MCF 10A (cell line): ENCODE measurements at regions of chr7 and their contacts with region 1.

Region 1: GRCh38 chr7:141533149-141533949 is 17.9 kb upstream of the AGK start:
- DNase-seq: peak; percentile 78
- H3K4me3 Mint-ChIP-seq: no peak overlapping the region
- H3K27ac Mint-ChIP-seq: no peak overlapping the region
- H3K4me1 Mint-ChIP-seq: no peaks in the 10 kb centered on the region
- H3K27me3 Mint-ChIP-seq: peaks cover 23% of the 10 kb centered on the region
- CTCF ChIP-seq: peak; percentile 89

Region 2: DNA sequence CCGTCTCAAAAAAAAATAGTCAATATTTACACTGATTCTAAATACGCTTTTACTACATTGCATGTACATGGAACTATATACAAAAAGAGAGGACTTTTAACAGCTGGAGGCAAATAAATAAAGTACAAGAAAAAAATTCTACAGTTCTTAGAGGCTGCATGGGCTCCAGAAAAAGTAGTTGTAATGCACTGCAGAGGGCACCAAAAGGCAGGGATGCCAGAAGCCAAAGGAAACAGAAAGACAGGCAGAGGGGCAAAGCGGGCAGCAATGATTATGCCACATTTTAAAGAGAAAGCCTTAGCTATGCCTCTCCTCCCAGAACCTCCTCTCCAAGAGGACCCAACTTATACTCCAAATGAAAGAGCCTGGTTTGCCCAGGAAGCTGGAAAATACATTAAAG is 872.2 kb before region 1 on chr7:
- CTCF ChIA-PET with region 1: no interaction called
- POLR2A ChIA-PET with region 1: no interaction called
- intact Hi-C with region 1: loop called (anchors 1 kb)
- DNase-seq: no peak
- H3K4me3 Mint-ChIP-seq: no peak overlapping the region
- H3K27ac Mint-ChIP-seq: no peak overlapping the region
- H3K4me1 Mint-ChIP-seq: peaks cover 12% of the 10 kb centered on the region
- H3K27me3 Mint-ChIP-seq: no peaks in the 10 kb centered on the region
- CTCF ChIP-seq: no peak

Region 3: DNA sequence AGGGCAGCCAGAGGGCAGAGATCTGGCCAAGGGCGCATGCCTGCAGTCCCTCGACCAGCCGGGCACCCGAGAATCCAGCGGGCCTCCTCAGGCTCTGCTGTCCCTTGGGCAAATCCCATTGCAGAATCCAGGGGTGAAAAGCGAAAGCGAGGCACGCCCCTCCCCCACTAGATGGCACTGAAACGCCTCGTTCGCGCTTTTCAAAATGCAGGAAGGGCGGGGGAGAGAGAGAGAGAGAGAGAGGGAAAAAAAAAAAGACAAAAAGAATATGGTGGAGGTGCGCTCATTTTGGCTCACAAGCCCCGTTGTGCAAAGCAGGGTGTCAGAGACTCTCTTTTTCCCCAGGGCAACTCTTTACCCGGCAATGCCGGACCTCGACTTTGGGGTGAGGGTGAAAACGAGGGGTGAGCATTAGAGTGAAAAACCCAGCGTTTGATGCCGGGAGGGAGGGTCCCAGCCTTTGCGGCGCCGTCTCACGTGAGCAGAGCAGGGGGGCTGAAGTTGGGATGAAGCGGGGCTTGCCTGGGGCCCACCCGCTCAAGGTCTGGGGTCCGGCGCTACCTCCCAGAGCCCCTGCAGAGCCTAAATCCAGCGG is 462.0 kb before region 1 on chr7:
- CTCF ChIA-PET with region 1: interaction called, 6 read pairs
- POLR2A ChIA-PET with region 1: no interaction called
- intact Hi-C with region 1: loop called (anchors 1 kb)
- DNase-seq: peak; percentile 31
- H3K4me3 Mint-ChIP-seq: peak overlapping the region; percentile 73
- H3K27ac Mint-ChIP-seq: no peak overlapping the region
- H3K4me1 Mint-ChIP-seq: no peaks in the 10 kb centered on the region
- H3K27me3 Mint-ChIP-seq: peaks cover 45% of the 10 kb centered on the region
- CTCF ChIP-seq: peak; percentile 22

Region 4: DNA sequence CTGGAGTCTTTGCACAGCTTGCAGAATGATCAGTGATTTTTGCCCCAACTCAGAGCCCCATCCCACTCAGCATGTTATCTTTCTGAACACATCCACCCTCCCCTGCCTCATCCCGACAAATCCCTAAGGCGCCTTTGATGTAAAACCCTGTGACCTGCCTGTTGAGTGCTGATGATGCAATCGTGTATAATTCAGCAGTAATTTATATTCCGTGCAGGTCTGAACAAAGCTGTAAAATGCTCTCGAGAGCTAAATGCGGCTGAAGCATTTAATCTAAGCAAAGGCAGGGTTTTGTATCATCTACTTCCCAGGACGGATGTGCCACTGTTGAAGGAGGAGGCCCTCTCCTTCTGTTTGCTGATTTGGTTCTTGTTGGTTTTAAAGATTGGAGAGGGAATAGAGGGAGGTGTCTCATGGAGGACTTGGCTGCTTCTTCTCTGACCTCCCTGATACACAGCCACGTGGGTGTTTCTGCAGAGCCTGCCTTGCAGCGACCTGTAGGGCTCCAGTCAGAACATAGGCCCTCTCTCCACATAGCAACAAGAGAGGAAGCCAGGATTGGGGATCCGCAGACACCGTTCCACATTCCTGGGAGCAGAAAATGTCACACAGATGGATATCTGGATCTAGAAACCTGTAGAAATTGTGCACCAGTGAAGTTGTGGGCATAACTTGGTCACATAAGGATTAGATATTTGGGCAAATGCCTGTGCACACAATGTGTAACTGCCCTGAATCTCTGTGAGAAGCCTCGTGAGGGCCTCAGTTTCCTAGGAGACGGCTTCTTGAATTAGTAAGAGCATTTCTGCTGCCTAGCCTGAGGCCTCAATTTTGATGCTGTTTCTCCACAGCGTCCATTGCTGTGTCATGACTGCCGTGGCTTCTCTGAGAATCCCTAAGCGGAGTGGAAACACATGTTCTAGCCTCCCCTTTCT is 72.3 kb before region 1 on chr7:
- CTCF ChIA-PET with region 1: no interaction called
- POLR2A ChIA-PET with region 1: no interaction called
- intact Hi-C with region 1: no loop called
- DNase-seq: peak; percentile 41
- H3K4me3 Mint-ChIP-seq: no peak overlapping the region
- H3K27ac Mint-ChIP-seq: no peak overlapping the region
- H3K4me1 Mint-ChIP-seq: no peaks in the 10 kb centered on the region
- H3K27me3 Mint-ChIP-seq: no peaks in the 10 kb centered on the region
- CTCF ChIP-seq: no peak

Region 5: DNA sequence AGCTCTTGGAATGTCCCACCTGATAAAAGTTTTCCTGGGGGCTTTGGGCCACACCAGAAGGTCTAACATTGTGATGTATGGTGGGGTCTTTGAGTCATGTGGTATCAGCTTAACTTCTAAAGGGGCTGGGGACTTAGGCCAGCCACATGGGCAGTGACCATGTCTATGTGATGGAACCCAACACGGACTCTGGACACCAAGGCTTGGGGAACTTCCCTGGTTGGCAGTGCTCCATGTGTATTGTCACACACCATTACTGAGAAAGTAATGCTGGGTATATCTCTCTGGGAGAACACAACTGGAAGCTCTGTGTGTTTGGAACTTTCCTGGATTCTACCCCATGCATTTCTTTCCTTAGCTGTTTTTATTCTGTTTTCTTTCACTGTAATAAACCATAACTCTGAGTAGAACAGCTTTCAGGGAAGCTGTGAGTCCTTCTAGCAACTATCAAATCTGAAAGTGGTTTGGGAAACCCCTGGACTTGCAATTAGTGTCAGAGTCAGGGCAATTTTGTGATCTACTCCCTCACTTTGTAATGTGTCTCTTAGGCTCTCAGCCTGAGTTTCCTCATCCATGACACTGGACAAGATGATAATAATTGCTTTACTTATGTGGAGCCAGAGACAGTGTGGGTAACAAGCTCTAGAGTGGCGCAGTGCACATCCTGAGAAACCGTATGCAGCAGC is 10.5 kb before region 1 on chr7:
- CTCF ChIA-PET with region 1: interaction called, 14 read pairs
- POLR2A ChIA-PET with region 1: no interaction called
- intact Hi-C with region 1: no loop called
- DNase-seq: no peak
- H3K4me3 Mint-ChIP-seq: no peak overlapping the region
- H3K27ac Mint-ChIP-seq: no peak overlapping the region
- H3K4me1 Mint-ChIP-seq: no peaks in the 10 kb centered on the region
- H3K27me3 Mint-ChIP-seq: peaks cover 13% of the 10 kb centered on the region
- CTCF ChIP-seq: no peak

Region 6: GRCh38 chr7:141654551-141654950 is 121.2 kb after region 1 on chr7:
- CTCF ChIA-PET with region 1: interaction called, 9 read pairs
- POLR2A ChIA-PET with region 1: no interaction called
- intact Hi-C with region 1: loop called (anchors 1 kb)
- DNase-seq: peak; percentile 75
- H3K4me3 Mint-ChIP-seq: no peak overlapping the region
- H3K27ac Mint-ChIP-seq: no peak overlapping the region
- H3K4me1 Mint-ChIP-seq: peaks cover 5% of the 10 kb centered on the region
- H3K27me3 Mint-ChIP-seq: no peaks in the 10 kb centered on the region
- CTCF ChIP-seq: peak; percentile 47